CD14-positive monocyte (primary cell): ENCODE measurements at regions of chr11 and their contacts with region 1.

Region 1: GRCh38 chr11:64304316-64305072 is 830 bp upstream of the ESRRA start:
- DNase-seq: peak; percentile 90 to 93 (median 91)
- H3K4me3 ChIP-seq: peak overlapping the region; percentile 28 to 91 (median 70)
- H3K4me3 Mint-ChIP-seq: peak overlapping the region; percentile 79 to 89
- H3K27ac ChIP-seq: peak overlapping the region; percentile 96 to 97
- H3K27ac Mint-ChIP-seq: peak overlapping the region; percentile 96 to 99 (median 99)
- H3K4me1 ChIP-seq: peaks cover 46 to 54% of the 10 kb centered on the region in 2 donors
- H3K4me1 Mint-ChIP-seq: peaks cover 52% of the 10 kb centered on the region
- H3K27me3 ChIP-seq: peaks cover 11 to 15% of the 10 kb centered on the region in 2 donors
- H3K27me3 Mint-ChIP-seq: peaks cover 19 to 29% (median 27%) of the 10 kb centered on the region in 3 donors
- CTCF ChIP-seq: peak; percentile 95

Region 2: GRCh38 chr11:64240394-64241174 is 63.9 kb before region 1 on chr11 and contains the start of gene FKBP2:
- intact Hi-C with region 1: loop called (anchors 2 to 5 kb)
- DNase-seq: peak; percentile 98 to 99 (median 99)
- H3K4me3 ChIP-seq: peak within 1 kb of the TSS; percentile 54 to 84 (median 81)
- H3K4me3 Mint-ChIP-seq: peak within 1 kb of the TSS; percentile 87 to 92
- H3K27ac ChIP-seq: peak within 1 kb of the TSS; percentile 96 to 100
- H3K27ac Mint-ChIP-seq: peak within 1 kb of the TSS; percentile 100
- H3K4me1 ChIP-seq: peaks cover 61 to 75% of the 10 kb centered on the region in 2 donors
- H3K4me1 Mint-ChIP-seq: peaks cover 57% of the 10 kb centered on the region
- H3K27me3 ChIP-seq: no peaks in the 10 kb centered on the region
- H3K27me3 Mint-ChIP-seq: peaks cover 0 to 6% (median under 1%) of the 10 kb centered on the region in 3 donors
- CTCF ChIP-seq: no peak
- polyA plus RNA-seq, gene FKBP2: 38.9 to 80.7 (median 71.1) TPM

Region 3: GRCh38 chr11:64259533-64260067 is 44.9 kb before region 1 on chr11:
- intact Hi-C with region 1: no loop called
- DNase-seq: peak in 1 of 3 donors; percentile 66
- H3K4me3 ChIP-seq: no peak overlapping the region
- H3K4me3 Mint-ChIP-seq: peak overlapping the region in 1 of 2 donors; percentile 54
- H3K27ac ChIP-seq: no peak overlapping the region
- H3K27ac Mint-ChIP-seq: peak overlapping the region in 4 of 7 donors; percentile 10 to 59 (median 17)
- H3K4me1 ChIP-seq: no peaks in the 10 kb centered on the region
- H3K4me1 Mint-ChIP-seq: no peaks in the 10 kb centered on the region
- H3K27me3 ChIP-seq: no peaks in the 10 kb centered on the region
- H3K27me3 Mint-ChIP-seq: peaks cover 0 to 1% (median 0%) of the 10 kb centered on the region in 3 donors
- CTCF ChIP-seq: no peak

Region 4: GRCh38 chr11:64269380-64270234 is 34.9 kb before region 1 on chr11:
- intact Hi-C with region 1: loop called (anchors 1 to 5 kb)
- DNase-seq: peak; percentile 98 to 100 (median 99)
- H3K4me3 ChIP-seq: peak overlapping the region; percentile 61 to 95 (median 67)
- H3K4me3 Mint-ChIP-seq: peak overlapping the region; percentile 94 to 98
- H3K27ac ChIP-seq: peak overlapping the region; percentile 84 to 97
- H3K27ac Mint-ChIP-seq: peak overlapping the region; percentile 96 to 99 (median 98)
- H3K4me1 ChIP-seq: peaks cover 29 to 34% of the 10 kb centered on the region in 2 donors
- H3K4me1 Mint-ChIP-seq: peaks cover 29% of the 10 kb centered on the region
- H3K27me3 ChIP-seq: no peaks in the 10 kb centered on the region
- H3K27me3 Mint-ChIP-seq: no peaks in the 10 kb centered on the region
- CTCF ChIP-seq: peak; percentile 17

Region 5: GRCh38 chr11:64317957-64318693 is 13.6 kb after region 1 on chr11 and contains the start of gene PRDX5:
- intact Hi-C with region 1: loop called in 1 of 2 experiments (anchors 1 kb)
- DNase-seq: peak; percentile 96 to 98 (median 98)
- H3K4me3 ChIP-seq: peak within 1 kb of the TSS; percentile 51 to 93 (median 91)
- H3K4me3 Mint-ChIP-seq: peak within 1 kb of the TSS; percentile 88 to 94
- H3K27ac ChIP-seq: peak within 1 kb of the TSS; percentile 96 to 97
- H3K27ac Mint-ChIP-seq: peak within 1 kb of the TSS; percentile 98 to 99 (median 99)
- H3K4me1 ChIP-seq: peaks cover 28 to 43% of the 10 kb centered on the region in 2 donors
- H3K4me1 Mint-ChIP-seq: peaks cover 29% of the 10 kb centered on the region
- H3K27me3 ChIP-seq: no peaks in the 10 kb centered on the region
- H3K27me3 Mint-ChIP-seq: peaks cover 0 to 1% (median 0%) of the 10 kb centered on the region in 3 donors
- CTCF ChIP-seq: peak; percentile 38
- polyA plus RNA-seq, gene PRDX5: 136 to 318 (median 286) TPM